Activated CD8-positive, alpha-beta T cell treated with anti-CD3 and anti-CD28 coated beads, Interleukin-2, amount 10 ng/mL, durations not matched to agents 7 days and 5 days (primary cell): ENCODE measurements at regions of chr3 and their contacts with region 1.

Region 1: DNA sequence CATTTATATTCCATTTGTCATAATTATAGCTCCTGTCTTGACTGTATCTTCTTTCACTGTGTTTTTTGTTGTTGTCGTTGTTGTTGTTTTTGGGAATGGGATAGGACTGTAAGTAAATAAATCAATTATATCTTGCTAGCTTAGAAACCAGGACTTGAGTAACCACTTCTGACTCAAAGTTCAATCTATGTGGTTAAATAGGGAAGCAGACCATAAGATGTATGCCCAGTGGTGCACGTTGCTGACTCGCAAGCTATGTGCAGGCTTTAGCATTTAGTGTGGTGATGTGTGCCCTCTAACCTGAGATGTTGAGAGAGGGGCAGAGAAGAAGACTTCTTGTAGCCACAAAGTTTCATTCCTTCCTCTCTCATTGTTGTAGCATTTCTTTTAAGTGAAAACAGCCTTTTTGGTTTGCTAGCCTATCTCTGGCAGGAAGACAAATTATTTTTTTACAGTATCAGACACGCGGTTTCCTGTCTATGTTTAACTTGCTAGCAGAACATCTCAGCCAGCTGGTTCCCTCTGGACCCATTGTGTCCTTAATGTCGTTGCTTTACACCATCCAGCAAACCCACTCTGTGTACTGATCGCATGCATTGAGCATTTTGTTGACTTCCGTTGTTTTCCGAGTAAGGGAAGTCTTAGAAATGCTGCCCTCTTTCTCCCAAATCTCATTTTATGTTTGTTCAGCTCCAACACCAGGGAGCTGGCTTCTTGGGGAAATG is 52.1 kb downstream of the TGFBR2 start:
- DNase-seq: peak; percentile 70
- ATAC-seq: peak; percentile 72
- H3K4me3 Mint-ChIP-seq: peak overlapping the region; percentile 45
- H3K27ac Mint-ChIP-seq: peak overlapping the region; percentile 93
- H3K4me1 Mint-ChIP-seq: peaks cover 99% of the 10 kb centered on the region
- H3K27me3 Mint-ChIP-seq: no peaks in the 10 kb centered on the region

Region 2: GRCh38 chr3:30606301-30607031 is 52.0 kb before region 1 on chr3 and contains the start of gene TGFBR2:
- CTCF ChIA-PET with region 1: interaction called, 9 read pairs
- POLR2A ChIA-PET with region 1: interaction called, 23 read pairs
- DNase-seq: peak; percentile 93
- ATAC-seq: peak; percentile 75
- H3K4me3 Mint-ChIP-seq: peak within 1 kb of the TSS; percentile 94
- H3K27ac Mint-ChIP-seq: peak within 1 kb of the TSS; percentile 98
- H3K4me1 Mint-ChIP-seq: peaks cover 64% of the 10 kb centered on the region
- H3K27me3 Mint-ChIP-seq: no peaks in the 10 kb centered on the region
- total RNA-seq, gene TGFBR2: 62.7 to 64.5 TPM

Region 3: GRCh38 chr3:30611613-30612436 is 46.7 kb before region 1 on chr3:
- CTCF ChIA-PET with region 1: interaction called, 9 read pairs
- POLR2A ChIA-PET with region 1: interaction called, 23 read pairs
- DNase-seq: no peak
- ATAC-seq: peak; percentile 37
- H3K4me3 Mint-ChIP-seq: peak overlapping the region; percentile 87
- H3K27ac Mint-ChIP-seq: peak overlapping the region; percentile 85
- H3K4me1 Mint-ChIP-seq: peaks cover 71% of the 10 kb centered on the region
- H3K27me3 Mint-ChIP-seq: no peaks in the 10 kb centered on the region

Region 4: DNA sequence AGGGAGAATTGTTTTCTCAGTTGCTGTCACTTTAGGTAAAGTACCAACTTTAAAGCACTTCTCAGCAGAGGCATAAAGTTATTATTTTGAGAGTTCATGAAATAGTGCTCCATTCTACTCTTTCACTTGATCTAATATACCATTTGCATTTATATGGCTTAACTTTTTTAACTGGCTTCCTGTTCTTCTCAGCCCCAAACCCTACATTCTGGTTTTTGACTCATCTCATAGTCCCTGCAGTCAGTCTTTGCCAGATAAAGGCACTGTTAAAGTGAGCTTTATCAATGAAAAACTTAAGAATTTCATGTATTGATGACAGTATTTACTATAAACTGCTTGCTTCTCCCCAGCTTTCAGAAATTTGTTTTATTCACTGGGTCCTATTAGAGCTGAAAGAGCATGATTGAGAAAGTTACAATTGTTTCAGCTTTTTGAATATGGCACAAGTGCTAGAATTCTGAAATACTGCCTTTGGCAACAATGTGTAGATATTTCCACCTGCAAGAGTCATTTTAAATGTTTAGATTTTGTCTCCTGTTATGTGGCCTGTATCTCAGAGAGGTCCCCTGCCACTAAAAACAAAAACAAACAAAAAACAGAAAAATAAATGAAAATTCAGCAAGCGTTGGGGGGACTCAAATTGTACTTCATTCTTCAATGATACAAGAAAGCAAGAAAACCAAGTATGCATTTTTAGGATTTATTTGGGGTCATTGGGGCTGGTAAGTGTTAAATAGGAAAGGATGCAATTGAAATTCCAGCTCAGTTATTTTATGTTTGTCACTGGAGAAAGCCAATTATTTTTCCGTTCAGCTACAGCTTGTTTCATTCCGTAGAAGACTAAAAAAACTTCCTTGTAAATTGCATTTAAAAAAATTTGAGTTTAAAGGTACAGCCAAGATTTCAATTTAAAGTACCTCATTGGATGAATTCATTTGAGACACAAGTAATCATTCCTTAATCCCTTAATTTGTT is 23.4 kb before region 1 on chr3:
- CTCF ChIA-PET with region 1: interaction called, 18 read pairs
- POLR2A ChIA-PET with region 1: interaction called, 10 read pairs
- DNase-seq: no peak
- ATAC-seq: no peak
- H3K4me3 Mint-ChIP-seq: peak overlapping the region; percentile 31
- H3K27ac Mint-ChIP-seq: peak overlapping the region; percentile 85
- H3K4me1 Mint-ChIP-seq: peaks cover 97% of the 10 kb centered on the region
- H3K27me3 Mint-ChIP-seq: no peaks in the 10 kb centered on the region

Region 5: DNA sequence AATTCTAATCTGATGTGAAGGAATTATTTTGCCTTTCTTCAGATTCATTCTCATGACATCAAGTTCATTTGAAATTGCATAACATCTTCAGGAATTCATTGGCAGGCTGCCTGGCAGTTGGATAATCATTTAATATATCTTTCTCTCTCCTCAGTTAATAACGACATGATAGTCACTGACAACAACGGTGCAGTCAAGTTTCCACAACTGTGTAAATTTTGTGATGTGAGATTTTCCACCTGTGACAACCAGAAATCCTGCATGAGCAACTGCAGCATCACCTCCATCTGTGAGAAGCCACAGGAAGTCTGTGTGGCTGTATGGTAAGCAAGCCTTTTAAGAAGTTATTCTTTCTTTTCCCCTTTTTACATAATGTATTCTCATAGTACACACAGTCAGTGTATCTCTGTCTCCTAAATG is 13.9 kb before region 1 on chr3:
- CTCF ChIA-PET with region 1: interaction called, 14 read pairs
- POLR2A ChIA-PET with region 1: interaction called, 26 read pairs
- DNase-seq: peak; percentile 76
- ATAC-seq: peak; percentile 65
- H3K4me3 Mint-ChIP-seq: peak overlapping the region; percentile 59
- H3K27ac Mint-ChIP-seq: peak overlapping the region; percentile 93
- H3K4me1 Mint-ChIP-seq: peaks cover 98% of the 10 kb centered on the region
- H3K27me3 Mint-ChIP-seq: no peaks in the 10 kb centered on the region